ENCODE measurements at regions of chr7 and their contacts with region 1.

Region 1: DNA sequence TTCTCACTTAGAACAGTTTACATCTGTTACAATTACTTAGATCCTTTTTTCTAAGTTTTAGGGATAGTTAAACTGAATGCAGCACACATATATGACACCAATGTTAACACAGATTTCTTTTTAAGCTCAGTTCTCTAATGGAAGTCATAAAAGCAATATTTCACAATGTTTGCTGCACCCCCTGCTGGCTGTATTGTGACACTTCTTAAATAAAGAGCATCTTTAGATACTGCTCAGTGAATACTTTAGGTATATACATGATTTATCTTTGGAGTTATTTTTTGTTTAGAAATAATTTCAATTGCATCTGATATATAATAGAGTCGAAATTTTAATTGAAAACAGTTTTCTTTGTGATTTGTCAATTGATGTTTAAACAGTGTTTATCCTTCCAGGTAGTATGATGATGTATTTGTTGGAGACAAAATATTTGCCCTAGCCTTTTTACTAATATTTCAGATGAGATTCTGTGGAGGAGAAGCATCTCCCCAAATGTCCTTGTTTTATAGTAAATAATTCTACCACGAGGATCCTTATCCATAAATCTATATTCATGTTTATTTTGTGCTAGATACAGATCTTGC is 174.4 kb downstream of the ST7 start:
- DNase-seq: peak; percentile 73
- ATAC-seq: 0 out of 2 replicates have a peak, but pooled peaks have one; percentile 11
- H3K4me3 ChIP-seq: no peak overlapping the region
- H3K27ac ChIP-seq: peak overlapping the region; percentile 42; the same call in 1 of the 2 replicates
- H3K4me1 ChIP-seq: peaks cover 65% of the 10 kb centered on the region
- H3K27me3 ChIP-seq: no peaks in the 10 kb centered on the region
- CTCF ChIP-seq: peak; percentile 86

Region 2: DNA sequence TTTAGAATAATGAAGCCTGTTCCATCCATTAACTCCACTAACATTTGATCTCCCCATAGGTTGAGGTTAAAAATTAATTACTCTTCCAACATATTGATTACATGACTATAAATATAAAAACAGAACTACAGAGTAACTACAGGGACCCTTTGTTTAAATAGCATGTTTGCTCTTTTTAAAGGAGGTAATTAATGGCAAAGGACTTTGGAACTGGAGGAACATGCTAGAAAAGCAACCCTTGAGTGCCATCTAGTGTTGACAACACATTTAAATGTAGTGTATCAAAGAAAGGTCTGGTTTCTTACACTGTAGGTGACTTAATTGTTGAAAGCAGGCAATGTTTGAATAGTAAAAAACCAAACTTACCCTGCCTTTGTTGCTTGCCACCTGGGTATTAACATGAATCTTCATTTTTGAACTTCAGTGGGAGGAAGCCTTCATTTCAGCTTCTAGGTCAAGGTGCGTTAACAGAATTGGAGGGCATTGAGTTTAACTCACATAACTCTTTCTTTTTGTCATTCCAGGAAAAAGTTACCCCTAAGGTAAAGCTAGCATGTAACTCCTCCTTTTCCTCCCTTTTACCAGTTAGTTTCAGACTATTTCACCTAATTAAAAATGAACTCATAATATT is 317.9 kb before region 1 on chr7:
- CTCF ChIA-PET with region 1: no interaction called
- POLR2A ChIA-PET with region 1: no interaction called
- intact Hi-C with region 1: loop called (anchors 10 kb)
- DNase-seq: peak; percentile 87
- ATAC-seq: peak; percentile 82
- H3K4me3 ChIP-seq: peak overlapping the region; percentile 42
- H3K27ac ChIP-seq: peak overlapping the region; percentile 76
- H3K4me1 ChIP-seq: peaks cover 38% of the 10 kb centered on the region
- H3K27me3 ChIP-seq: no peaks in the 10 kb centered on the region
- CTCF ChIP-seq: peak; percentile 85

Region 3: GRCh38 chr7:117012696-117013095 is 115.0 kb before region 1 on chr7:
- CTCF ChIA-PET with region 1: interaction called, 3 read pairs
- POLR2A ChIA-PET with region 1: no interaction called
- intact Hi-C with region 1: loop called (anchors 5 kb)
- DNase-seq: peak; percentile 66
- ATAC-seq: peak; percentile 65
- H3K4me3 ChIP-seq: no peak overlapping the region
- H3K27ac ChIP-seq: no peak overlapping the region
- H3K4me1 ChIP-seq: peaks cover 24% of the 10 kb centered on the region
- H3K27me3 ChIP-seq: no peaks in the 10 kb centered on the region
- CTCF ChIP-seq: peak; percentile 55

Region 4: DNA sequence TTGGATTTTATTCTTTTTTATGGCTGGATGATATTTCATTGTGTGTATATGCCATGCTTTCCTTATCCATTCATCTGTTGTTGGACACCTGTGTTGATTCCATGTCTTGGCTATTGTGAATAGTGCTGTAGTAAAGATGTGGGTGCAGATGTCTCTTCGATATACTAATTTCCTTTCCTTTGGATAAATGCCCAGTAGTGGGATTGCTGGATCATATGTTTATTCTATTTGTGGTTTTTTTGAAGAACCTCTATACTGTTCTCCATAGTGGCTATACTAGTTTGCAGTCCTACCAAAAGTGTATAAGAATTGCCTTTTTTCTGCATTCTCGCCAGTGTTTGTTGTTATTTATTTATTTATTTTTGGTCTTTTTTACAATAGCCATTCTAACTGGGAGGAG is 35.4 kb after region 1 on chr7:
- CTCF ChIA-PET with region 1: interaction called, 5 read pairs
- POLR2A ChIA-PET with region 1: no interaction called
- intact Hi-C with region 1: loop called (anchors 2 kb)
- DNase-seq: peak; percentile 87
- ATAC-seq: peak; percentile 72
- H3K4me3 ChIP-seq: no peak overlapping the region
- H3K27ac ChIP-seq: peak overlapping the region; percentile 83
- H3K4me1 ChIP-seq: peaks cover 43% of the 10 kb centered on the region
- H3K27me3 ChIP-seq: no peaks in the 10 kb centered on the region
- CTCF ChIP-seq: no peak

Region 5: DNA sequence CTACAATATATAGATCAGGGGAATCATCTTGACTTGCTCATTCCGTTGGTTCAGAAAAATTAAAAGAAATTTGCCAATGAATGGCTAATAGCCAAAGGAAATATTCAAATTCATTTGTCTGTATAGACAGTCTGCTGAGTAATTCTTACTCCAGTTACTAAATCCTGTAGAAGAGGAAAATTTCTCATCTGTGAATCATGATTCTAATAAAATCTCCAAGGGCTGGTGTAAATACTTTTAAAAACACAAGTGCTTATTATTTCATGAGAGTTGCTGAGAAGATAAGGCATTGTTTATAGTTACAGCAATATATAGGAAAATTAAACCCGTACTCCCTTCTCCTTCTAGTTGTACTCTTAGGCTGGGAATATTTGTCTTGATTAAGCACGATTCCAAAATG is 142.2 kb after region 1 on chr7:
- CTCF ChIA-PET with region 1: no interaction called
- POLR2A ChIA-PET with region 1: no interaction called
- intact Hi-C with region 1: loop called (anchors 1 kb)
- DNase-seq: peak; percentile 88
- ATAC-seq: peak; percentile 80
- H3K4me3 ChIP-seq: peak overlapping the region; percentile 59
- H3K27ac ChIP-seq: peak overlapping the region; percentile 98
- H3K4me1 ChIP-seq: peaks cover 26% of the 10 kb centered on the region
- H3K27me3 ChIP-seq: no peaks in the 10 kb centered on the region
- CTCF ChIP-seq: no peak

Region 6: DNA sequence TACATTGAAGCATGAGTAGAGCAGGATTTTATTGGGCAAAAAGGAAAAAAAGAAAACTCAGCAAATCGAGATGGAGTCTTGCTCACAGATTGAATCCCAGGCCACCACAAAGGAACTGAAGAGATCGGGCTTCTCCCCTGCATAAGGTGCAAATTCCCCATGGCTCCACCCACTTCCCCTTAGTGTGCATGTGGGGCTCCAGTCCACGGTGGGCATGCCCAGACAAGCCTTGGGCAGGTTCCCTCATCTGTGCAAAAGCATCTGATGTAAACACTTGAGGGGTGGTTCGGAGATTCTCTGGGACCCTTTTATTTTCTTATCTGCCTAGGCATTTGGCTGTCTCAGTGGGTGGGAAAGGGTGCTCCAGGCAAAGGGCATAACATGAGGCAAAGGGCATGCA is 502.8 kb after region 1 on chr7:
- CTCF ChIA-PET with region 1: no interaction called
- POLR2A ChIA-PET with region 1: no interaction called
- intact Hi-C with region 1: no loop called
- DNase-seq: no peak
- ATAC-seq: no peak
- H3K4me3 ChIP-seq: no peak overlapping the region
- H3K27ac ChIP-seq: no peak overlapping the region
- H3K4me1 ChIP-seq: no peaks in the 10 kb centered on the region
- H3K27me3 ChIP-seq: peaks cover 5% of the 10 kb centered on the region; the same call in 1 of the 2 replicates
- CTCF ChIP-seq: no peak

Measured in PC-3 (cell line).